Posterior cingulate gyrus (tissue), 11 donors: ENCODE measurements at regions of chr1 and their contacts with region 1.

Region 1: GRCh38 chr1:48202030-48202752 is 20.3 kb upstream of the SLC5A9 start:
- DNase-seq: peak; percentile 48 to 95 (median 78)

Region 2: DNA sequence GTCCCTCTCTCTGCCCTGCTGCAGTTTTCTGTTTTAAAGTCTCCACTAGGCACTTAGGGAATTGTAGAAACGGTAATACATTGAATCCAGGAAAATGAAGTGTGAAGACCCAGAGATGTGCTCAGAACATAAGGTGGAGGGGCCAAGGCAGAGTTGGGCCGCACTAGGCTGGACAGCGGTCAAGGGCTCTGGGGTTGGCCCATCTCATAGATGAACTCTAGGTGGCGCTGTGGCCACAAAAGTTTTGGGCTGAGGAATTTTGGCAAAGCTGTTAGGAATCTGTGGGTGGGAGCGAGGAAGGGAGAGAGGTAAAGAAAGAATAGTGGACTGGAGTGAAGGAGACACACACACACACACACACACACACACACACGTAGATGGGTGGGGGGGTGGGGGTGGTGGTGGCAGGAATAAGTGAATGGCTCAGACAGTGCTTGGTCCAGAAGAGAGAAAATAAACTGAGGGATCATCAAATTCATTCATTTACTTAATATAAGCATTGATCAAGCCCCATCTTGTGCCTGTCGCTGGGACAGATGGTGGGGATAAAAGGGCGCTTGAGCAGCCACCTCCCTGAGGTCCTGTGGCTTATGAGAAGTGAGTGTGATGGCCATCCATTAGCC is 463.5 kb before region 1 on chr1:
- intact Hi-C with region 1: loop called (anchors 5 kb)
- DNase-seq: peak in 5 of 10 donors; percentile 28 to 85 (median 49)

Region 3: GRCh38 chr1:48109390-48110013 is 92.7 kb before region 1 on chr1:
- intact Hi-C with region 1: loop called (anchors 1 kb)
- DNase-seq: no peak